ENCODE measurements at regions of chr16 and their contacts with region 1.

Region 1: DNA sequence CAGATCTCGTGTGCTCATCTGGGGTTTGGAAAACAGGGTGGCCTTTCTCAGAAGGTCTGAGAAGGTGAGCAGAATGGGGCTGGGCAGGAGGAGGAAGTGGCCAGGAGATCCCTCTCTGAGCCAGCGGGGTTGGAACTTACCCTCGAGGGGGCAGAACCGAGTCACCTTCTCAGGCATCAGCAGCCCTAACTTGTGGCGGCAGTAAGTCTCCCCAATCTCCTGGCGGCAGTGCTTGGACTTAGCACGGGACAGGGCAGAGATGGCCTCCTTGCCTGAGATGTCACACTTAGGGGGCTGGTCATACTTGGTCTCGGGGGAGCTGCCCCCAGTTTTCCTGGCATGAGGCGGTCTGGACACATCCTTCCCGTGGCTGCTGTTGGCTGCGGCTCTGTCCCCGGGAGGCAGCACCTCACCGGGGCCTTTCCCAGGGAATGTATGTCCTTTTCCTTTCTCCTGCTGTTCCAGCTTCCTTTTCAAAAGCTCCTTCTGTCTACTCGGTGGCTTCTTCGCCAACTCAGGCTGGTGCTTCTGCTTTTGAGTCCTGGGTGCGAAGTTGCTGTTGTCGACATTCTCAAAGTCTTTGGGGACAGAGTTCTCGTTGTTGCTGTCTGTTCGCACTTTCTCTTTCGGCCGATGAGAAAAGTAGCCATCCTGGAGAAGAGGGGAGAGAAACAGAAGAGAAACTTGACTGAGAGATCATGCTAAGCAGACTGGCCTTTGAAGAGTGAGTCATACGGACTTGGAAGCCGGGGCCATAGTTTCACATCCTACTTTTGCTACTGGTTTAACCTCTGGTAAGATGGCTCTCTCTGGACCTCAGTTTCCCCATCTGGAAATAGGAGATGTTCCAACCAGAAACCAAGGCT is 211.7 kb downstream of the XYLT1 start:
- DNase-seq: peak; percentile 82
- CTCF ChIP-seq: peak; percentile 60

Region 2: DNA sequence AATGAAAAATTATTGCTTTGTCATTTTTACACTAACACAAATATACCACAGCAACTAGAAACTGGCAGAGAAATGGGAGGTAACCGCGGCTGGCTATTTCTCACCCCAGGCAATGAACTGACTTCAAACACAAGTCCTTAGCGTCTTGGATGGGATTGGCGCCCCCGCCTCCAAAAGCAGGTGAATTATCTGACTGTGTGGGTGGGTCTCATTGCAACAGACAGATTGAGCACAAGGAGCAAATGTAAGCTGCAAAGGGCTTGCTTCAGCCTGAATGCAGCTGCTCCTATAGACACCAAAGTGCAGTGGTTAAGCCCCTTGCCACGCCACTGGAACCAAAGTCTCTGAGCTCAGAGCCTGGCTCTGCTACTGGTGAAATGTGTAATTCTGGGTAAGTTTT is 13.3 kb before region 1 on chr16:
- CTCF ChIA-PET with region 1: interaction called, 34 read pairs
- POLR2A ChIA-PET with region 1: interaction called, 4 read pairs
- DNase-seq: no peak
- CTCF ChIP-seq: no peak

Region 3: DNA sequence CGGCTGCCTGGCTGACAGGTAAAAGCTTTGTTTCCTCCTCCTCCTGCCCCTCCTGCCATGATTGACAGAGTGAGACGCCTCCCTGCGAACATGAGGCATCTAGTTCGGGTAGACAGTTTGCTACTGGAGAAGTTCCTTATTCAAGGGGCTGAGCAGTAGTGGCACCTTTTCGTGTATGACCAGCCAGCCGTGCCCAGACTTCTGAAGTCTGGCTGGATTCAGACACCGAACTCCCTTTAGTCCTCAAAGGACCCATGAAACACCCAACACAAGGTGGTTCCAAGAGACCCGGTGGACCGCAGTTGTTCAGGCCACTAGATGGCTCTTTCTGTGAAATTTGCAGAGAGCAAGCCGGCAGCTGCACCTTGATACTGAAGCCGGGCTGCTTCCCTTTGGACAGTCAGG is 18.9 kb after region 1 on chr16:
- CTCF ChIA-PET with region 1: interaction called, 39 read pairs
- POLR2A ChIA-PET with region 1: interaction called, 3 read pairs
- DNase-seq: peak; percentile 48
- CTCF ChIP-seq: peak; percentile 73

Region 4: DNA sequence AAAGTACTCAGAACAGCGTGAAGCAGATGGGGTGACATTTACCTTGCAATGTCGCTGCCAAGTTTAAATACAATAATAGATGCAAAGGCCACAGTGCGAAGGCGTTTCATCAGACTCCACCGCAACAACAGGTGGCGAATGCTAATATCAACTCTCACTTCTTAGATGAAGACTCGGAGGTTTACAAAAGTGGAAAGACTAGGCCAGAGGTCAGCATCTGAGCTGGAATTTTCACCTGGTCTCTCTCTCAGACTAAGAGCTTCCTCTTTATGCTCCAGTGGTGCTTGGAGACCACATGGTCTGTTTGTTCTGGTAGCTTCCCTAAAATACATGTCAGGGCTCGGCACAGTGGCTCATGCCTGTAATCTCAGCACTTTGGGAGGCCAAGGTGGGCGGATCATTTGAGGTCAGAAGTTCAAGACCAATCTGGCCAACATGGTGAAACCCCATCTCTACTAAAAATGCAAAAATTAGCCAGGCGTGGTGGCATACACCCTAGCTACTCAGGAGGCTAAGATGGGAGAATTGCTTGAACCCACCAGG is 42.6 kb after region 1 on chr16:
- CTCF ChIA-PET with region 1: interaction called, 7 read pairs
- POLR2A ChIA-PET with region 1: interaction called, 10 read pairs
- DNase-seq: peak; percentile 72
- CTCF ChIP-seq: no peak

Region 5: DNA sequence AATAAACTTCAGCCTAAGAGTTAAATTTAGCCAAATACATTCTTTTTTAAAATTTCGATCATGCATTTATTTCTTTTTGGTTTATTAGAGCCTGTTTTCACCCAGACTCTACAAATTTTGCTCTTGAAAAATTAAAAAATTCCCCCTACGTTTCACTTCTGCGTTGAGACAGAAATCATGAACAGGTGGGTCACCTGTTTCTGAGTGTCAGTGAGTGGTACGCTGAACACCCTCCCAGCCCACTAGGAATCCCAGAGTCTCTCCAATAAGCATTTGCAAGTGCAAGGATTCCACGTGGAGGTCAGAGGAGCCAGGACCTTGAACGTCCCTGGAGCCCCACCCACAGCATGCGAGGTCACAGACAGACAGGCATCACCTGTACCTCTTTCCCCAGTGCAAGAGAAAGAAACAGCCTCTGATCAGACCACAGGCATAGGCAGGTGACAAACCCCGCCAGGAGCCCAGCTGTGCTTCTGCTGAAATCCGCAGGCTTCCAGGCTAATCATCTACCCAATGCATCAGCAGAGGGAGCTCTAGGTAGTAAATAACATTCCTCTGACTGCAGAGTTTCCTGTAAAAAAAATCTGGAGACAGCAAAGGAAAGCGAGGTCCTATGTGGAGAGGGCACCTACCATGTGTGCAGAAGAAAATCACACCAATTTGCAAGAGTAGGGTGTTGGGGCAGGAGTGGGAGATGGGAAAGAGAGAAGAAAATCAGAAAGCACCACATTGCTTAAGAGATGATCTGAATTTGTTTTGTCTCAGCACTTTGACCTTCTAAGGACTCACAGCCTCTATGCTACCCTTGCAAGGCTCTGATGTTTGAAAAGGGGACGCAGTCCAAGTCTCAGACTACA is 217.6 kb after region 1 on chr16:
- CTCF ChIA-PET with region 1: interaction called, 19 read pairs
- POLR2A ChIA-PET with region 1: no interaction called
- DNase-seq: peak; percentile 67
- CTCF ChIP-seq: peak; percentile 54

Measured in GM10248 (cell line).